ENCODE measurements at regions of chr16 and their contacts with region 1.

Region 1: DNA sequence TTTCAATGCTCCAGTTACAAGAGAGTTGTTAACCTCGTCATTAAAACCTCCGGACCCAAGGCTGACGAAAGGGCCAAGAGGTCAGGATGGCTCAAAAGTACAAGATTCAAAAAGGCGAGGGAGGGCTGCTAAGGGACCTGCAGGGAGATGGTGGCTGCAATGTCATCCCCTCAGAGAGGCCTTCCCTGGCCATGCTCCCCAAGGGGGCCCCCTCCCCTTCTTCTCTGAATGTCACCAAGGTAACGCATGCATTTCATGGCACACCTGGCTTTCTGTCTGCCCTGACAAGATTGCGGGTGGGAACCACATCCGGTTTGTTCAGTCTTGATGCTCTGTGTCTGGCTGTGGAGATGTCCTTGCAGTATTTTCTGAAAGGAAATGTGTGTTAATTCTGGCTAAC is 89.9 kb downstream of the C16orf78 start:
- DNase-seq: no peak

Region 2: DNA sequence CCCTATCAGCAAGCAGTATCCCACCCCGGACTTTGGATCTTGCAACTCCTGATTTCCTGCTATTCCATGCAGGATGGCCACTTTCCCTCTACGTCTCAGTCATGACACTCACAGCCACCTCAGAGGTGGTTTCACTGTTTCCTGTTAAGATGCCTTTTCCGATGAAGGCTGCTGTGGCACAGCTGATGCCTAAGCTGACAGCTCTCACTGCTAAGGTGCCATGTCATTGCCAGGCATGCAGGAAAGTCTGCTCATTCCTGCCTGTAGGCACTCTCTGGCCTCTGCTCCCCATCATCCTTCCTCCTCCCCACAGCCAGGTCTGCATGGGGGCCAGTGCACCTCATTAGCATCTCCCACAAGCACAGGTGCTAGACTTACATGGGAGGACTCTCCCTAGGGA is 354.9 kb before region 1 on chr16:
- intact Hi-C with region 1: loop called in 1 of 2 experiments (anchors 5 kb)
- DNase-seq: no peak

Region 3: DNA sequence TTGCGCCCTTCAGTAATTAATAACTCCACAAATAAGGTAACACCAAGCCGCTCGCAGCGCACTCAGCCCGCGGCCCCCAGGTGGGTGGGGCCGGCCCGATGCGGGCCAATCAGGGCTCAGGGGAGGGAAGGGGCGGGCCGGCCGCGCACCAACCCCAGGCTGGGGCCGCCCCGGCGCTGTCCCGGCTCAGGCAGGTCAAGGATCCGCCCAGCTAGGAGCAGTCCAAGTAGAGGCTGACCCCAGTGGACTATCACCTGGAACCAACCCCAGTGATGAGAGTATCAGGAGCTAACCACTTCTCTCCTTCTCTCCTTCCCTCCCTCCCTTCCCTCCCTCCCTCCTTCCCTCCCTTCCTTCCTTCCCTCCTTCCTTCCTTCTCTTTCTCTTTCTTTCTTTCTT is 20.9 kb after region 1 on chr16:
- intact Hi-C with region 1: no loop called
- DNase-seq: peak; percentile 89

Region 4: GRCh38 chr16:49542391-49542891 is 78.9 kb after region 1 on chr16:
- intact Hi-C with region 1: no loop called
- DNase-seq: no peak

Measured in posterior vena cava (tissue), 2 donors.